ENCODE measurements at regions of chr12 and their contacts with region 1.

Region 1: GRCh38 chr12:70719672-70720420 is 82.6 kb upstream of the PTPRB start:
- DNase-seq: peak; percentile 51
- ATAC-seq: peak; percentile 80 to 82

Region 2: GRCh38 chr12:69900720-69901131 is 819.1 kb before region 1 on chr12:
- intact Hi-C with region 1: loop called in 1 of 2 experiments (anchors 10 kb)
- DNase-seq: peak; percentile 81
- ATAC-seq: peak; percentile 34 to 58

Region 3: GRCh38 chr12:70590051-70590450 is 129.8 kb before region 1 on chr12:
- intact Hi-C with region 1: loop called (anchors 2 to 5 kb)
- DNase-seq: peak; percentile 79
- ATAC-seq: peak; percentile 74 to 90

Region 4: DNA sequence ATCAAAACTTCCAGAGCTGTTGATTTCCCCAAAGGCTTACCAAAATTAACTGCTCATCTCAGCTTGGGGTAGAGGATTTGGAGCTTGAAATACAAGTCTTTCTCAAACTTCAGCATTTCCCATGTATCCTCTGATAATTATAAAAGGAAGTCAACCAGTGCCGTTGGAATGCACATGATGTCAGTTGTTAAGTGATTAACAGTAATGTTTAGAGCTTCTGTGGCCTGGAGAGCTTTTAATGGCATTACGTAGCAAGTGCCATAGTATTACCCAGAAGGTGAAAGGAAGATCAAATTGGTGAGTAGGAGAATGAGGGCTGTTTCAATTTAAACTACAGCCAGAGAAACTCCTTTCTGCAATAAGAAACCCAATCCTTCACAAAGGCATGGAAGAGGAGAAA is 263.1 kb after region 1 on chr12:
- intact Hi-C with region 1: no loop called
- DNase-seq: no peak
- ATAC-seq: no peak

Measured in left cardiac atrium (tissue), 4 donors.